Naive thymus-derived CD4-positive, alpha-beta T cell (primary cell): ENCODE measurements at regions of chr14 and their contacts with region 1.

Region 1: GRCh38 chr14:67240978-67241414 is 239 bp upstream of the PALS1 start:
- DNase-seq: peak; percentile 87 to 93 (median 91)
- ATAC-seq: peak; percentile 97
- H3K4me3 ChIP-seq: peak overlapping the region; percentile 84
- H3K4me3 Mint-ChIP-seq: peak overlapping the region; percentile 81 to 95 (median 91)
- H3K27ac ChIP-seq: peak overlapping the region; percentile 74
- H3K27ac Mint-ChIP-seq: peak overlapping the region; percentile 8 to 92 (median 85)
- H3K4me1 ChIP-seq: peaks cover 6 to 10% of the 10 kb centered on the region in 2 donors
- H3K4me1 Mint-ChIP-seq: peaks cover 16 to 37% (median 28%) of the 10 kb centered on the region in 7 donors
- H3K27me3 ChIP-seq: no peaks in the 10 kb centered on the region
- H3K27me3 Mint-ChIP-seq: peaks cover 0 to 33% (median 0%) of the 10 kb centered on the region in 5 donors

Region 2: GRCh38 chr14:66507722-66508546 is 733.1 kb before region 1 on chr14 and contains the start of gene GPHN:
- CTCF ChIA-PET with region 1: no interaction called
- POLR2A ChIA-PET with region 1: interaction called, 4 read pairs
- intact Hi-C with region 1: loop called (anchors 1 kb)
- DNase-seq: peak; percentile 62 to 87 (median 82)
- ATAC-seq: peak; percentile 93
- H3K4me3 ChIP-seq: peak within 1 kb of the TSS; percentile 78
- H3K4me3 Mint-ChIP-seq: peak within 1 kb of the TSS; percentile 94 to 100 (median 99)
- H3K27ac ChIP-seq: peak within 1 kb of the TSS; percentile 70
- H3K27ac Mint-ChIP-seq: peak within 1 kb of the TSS; percentile 71 to 96 (median 91)
- H3K4me1 ChIP-seq: peaks cover 6 to 7% of the 10 kb centered on the region in 2 donors
- H3K4me1 Mint-ChIP-seq: peaks cover 16 to 42% (median 34%) of the 10 kb centered on the region in 7 donors
- H3K27me3 ChIP-seq: no peaks in the 10 kb centered on the region
- H3K27me3 Mint-ChIP-seq: peaks cover 0 to 29% (median 0%) of the 10 kb centered on the region in 5 donors
- total RNA-seq, gene GPHN: 11.8 to 28.1 (median 14.8) TPM

Region 3: DNA sequence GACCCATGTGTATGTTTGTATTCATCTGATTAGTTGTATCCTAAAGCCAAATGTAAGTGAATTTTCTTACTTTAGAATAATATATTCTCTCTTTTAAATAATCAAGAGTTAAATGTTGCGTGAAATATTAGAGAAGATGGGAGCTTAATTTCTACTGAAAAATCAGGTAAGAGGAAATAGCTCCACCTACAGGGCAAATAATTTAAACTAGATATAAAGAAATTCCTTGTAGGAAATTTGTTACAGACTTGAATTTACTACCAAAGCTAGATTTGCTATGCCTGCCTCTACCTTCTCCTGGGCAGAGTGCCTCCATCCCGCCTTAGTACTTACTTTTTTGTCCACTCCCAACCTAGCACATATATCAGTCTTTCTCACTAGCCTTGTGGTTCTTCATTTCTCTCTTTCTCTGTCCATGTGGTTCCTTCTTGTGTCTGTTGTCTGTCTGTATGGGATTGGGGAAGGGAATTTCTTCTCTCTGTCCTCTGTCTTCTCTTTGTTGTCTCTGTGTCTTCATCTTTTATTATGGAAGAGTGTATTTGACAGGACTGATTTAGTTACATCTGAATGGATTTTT is 45.0 kb after region 1 on chr14:
- CTCF ChIA-PET with region 1: interaction called, 3 read pairs
- POLR2A ChIA-PET with region 1: no interaction called
- intact Hi-C with region 1: loop called in 1 of 2 experiments (anchors 1 kb)
- DNase-seq: peak in 6 of 9 donors; percentile 3 to 37 (median 30)
- ATAC-seq: no peak
- H3K4me3 ChIP-seq: no peak overlapping the region
- H3K4me3 Mint-ChIP-seq: no peak overlapping the region
- H3K27ac ChIP-seq: no peak overlapping the region
- H3K27ac Mint-ChIP-seq: peak overlapping the region in 1 of 9 donors; percentile 83
- H3K4me1 ChIP-seq: no peaks in the 10 kb centered on the region
- H3K4me1 Mint-ChIP-seq: peaks cover 0 to 5% (median 0%) of the 10 kb centered on the region in 7 donors
- H3K27me3 ChIP-seq: no peaks in the 10 kb centered on the region
- H3K27me3 Mint-ChIP-seq: no peaks in the 10 kb centered on the region